Calu3 (cell line): ENCODE measurements at regions of chr7 and their contacts with region 1.

Region 1: DNA sequence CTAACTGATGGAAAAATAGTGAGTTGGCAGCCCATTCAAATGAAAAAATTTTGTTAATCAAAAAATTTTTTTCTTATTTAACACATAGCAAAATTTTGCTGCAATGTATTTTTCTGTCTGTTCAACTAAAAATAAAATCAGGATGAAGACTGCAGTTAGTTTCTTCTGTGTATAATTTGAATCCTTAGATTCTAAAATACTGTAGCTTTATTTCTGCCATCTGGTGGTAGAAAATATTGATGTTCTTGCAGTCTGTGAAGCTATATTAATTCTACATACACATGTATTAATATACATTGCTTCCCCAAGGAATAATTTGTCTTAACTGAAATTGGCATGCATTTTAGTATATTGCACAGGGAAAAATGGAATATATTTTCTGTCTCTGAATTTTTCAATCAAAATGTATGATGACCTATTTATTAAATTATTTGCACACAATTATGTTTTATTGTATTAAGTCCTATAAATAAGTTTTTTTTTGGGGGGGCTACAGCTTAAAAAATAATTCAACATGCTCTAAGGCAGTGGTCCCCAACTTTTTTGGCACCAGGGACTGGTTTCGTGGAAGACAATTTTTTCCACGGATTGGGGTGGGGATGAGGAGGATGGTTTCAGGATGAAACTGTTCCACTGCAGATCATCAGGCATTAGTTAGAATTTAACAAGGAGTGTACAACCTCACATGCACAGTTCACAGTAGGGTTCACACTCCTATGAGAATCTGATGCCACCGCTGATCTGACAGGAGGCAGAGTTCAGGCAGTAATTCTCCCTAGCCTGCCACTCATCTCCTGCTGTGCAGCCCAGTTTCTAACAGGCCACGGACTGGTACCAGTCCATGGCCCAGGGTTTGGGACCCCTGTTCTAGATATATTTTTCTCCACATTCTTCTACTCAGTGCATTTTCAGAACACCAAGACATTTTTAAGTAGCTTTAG is 119.4 kb downstream of the GNAT3 start:
- DNase-seq: no peak
- H3K4me3 Mint-ChIP-seq: no peak overlapping the region
- H3K27ac Mint-ChIP-seq: no peak overlapping the region
- H3K4me1 Mint-ChIP-seq: peaks cover 21% of the 10 kb centered on the region
- H3K27me3 Mint-ChIP-seq: no peaks in the 10 kb centered on the region
- CTCF ChIP-seq: no peak

Region 2: DNA sequence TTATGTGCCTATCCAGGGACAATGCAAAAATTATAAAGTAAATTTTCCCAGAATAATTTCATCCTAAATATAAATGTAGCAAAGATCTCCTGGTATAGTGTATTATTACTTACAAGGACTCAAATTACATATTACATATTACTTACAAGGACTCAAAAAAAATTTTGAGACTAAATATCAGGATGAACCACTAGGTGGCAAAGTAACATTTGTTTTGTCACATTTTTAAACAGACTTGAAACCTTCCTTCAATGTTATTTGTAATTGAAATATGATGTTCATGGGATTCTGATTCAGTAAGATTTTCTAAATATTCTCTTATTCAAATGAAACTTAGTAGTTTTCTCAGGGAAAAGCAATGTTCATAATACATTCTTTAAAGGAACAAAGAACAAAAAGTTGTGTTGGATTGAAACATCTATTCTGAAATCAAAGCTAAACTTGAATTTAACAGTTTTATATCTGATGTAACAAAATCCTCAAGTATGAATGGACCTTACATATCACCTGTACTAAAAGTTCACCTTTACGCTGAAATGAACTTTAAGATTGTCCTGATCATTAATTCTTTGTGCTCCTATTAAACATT is 332.2 kb before region 1 on chr7:
- CTCF ChIA-PET with region 1: no interaction called
- intact Hi-C with region 1: loop called (anchors 2 kb)
- DNase-seq: no peak
- H3K4me3 Mint-ChIP-seq: no peak overlapping the region
- H3K27ac Mint-ChIP-seq: no peak overlapping the region
- H3K4me1 Mint-ChIP-seq: no peaks in the 10 kb centered on the region
- H3K27me3 Mint-ChIP-seq: no peaks in the 10 kb centered on the region
- CTCF ChIP-seq: peak; percentile 15

Region 3: GRCh38 chr7:80134536-80135320 is 257.8 kb before region 1 on chr7 and contains the start of gene GNAI1:
- CTCF ChIA-PET with region 1: interaction called, 17 read pairs
- intact Hi-C with region 1: loop called (anchors 2 kb)
- DNase-seq: peak; percentile 75
- H3K4me3 Mint-ChIP-seq: peak within 1 kb of the TSS; percentile 93
- H3K27ac Mint-ChIP-seq: peak within 1 kb of the TSS; percentile 86
- H3K4me1 Mint-ChIP-seq: peaks cover 21% of the 10 kb centered on the region
- H3K27me3 Mint-ChIP-seq: no peaks in the 10 kb centered on the region
- CTCF ChIP-seq: no peak
- total RNA-seq, gene GNAI1: 14.7 and 20.5 TPM in 2 replicates

Region 4: GRCh38 chr7:80218723-80219122 is 173.8 kb before region 1 on chr7:
- CTCF ChIA-PET with region 1: no interaction called
- intact Hi-C with region 1: loop called (anchors 5 kb)
- DNase-seq: no peak
- H3K4me3 Mint-ChIP-seq: no peak overlapping the region
- H3K27ac Mint-ChIP-seq: no peak overlapping the region
- H3K4me1 Mint-ChIP-seq: peaks cover 10% of the 10 kb centered on the region
- H3K27me3 Mint-ChIP-seq: no peaks in the 10 kb centered on the region
- CTCF ChIP-seq: no peak

Region 5: DNA sequence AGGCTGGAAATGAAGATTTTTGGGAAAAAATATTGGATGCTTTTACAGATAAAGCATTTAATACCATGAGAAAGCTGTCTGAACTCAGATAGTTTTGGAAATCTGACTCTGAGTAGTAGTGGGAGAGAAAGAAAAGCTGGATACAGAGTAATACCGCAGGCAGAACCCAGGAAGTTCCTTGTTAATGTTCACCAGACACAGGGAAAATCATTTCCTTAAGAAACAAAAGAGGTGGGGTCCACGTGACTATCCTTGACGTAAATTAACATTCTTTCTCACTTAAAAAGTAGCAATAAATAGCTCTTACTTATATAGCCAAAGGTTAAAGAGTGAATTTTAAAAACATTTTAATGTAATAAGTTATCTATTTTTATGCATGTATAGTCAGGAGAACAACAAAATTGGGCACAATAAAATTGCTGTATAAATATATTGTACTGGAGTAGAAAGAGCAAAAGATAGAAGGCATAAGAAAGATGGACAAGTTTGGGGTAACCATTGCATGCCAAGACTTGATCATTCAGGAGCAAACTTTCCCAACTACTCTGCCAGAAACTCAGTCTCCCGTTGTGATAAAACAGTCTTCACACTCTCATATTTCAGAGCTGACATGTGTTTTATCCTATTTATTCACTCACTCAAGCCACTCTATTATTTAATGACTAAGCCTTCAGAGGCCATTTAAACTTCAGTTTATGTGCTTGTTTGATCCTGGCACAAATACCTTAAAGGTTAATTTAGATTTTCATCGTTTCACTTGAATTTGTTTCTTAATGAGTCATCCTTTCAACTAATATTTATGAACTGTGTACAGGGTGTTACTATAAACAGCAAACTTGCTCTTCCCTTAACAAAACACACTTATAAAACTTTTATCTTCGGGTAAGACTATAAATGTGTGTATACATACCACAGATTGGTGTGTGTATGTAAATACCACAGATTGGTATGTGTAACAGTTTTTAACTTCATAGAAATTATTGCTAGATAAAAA is 114.8 kb before region 1 on chr7:
- CTCF ChIA-PET with region 1: no interaction called
- intact Hi-C with region 1: loop called (anchors 10 kb)
- DNase-seq: peak; percentile 35
- H3K4me3 Mint-ChIP-seq: peak overlapping the region; percentile 21
- H3K27ac Mint-ChIP-seq: peak overlapping the region; percentile 95
- H3K4me1 Mint-ChIP-seq: peaks cover 44% of the 10 kb centered on the region
- H3K27me3 Mint-ChIP-seq: no peaks in the 10 kb centered on the region
- CTCF ChIP-seq: no peak

Region 6: DNA sequence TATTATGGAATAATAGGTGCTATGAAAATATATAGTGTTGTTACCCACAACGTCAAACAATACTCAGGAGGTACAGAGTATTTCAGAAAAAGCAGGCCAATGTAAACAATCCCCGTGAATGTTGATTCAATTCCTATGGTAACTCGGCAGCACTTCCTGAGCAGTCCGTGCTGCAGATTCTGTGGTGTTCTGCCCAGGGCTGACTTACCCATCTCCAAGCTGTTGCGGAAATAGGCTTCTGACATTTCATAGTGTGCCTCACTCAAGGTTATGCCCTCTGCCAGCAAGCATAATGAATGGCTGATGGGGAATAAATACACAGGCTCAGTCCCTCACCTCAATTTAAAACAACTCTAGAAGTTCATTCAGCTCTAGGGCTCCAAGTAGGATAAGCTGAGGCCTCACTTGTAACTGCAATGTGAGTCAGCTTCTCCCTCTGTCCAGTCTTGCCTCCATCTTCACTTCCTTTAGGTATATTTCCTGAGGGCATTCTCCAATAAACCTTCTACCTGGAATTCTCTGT is 80.3 kb before region 1 on chr7:
- CTCF ChIA-PET with region 1: no interaction called
- intact Hi-C with region 1: no loop called
- DNase-seq: peak; percentile 29
- H3K4me3 Mint-ChIP-seq: no peak overlapping the region
- H3K27ac Mint-ChIP-seq: peak overlapping the region; percentile 36
- H3K4me1 Mint-ChIP-seq: peaks cover 23% of the 10 kb centered on the region
- H3K27me3 Mint-ChIP-seq: no peaks in the 10 kb centered on the region
- CTCF ChIP-seq: no peak

Region 7: DNA sequence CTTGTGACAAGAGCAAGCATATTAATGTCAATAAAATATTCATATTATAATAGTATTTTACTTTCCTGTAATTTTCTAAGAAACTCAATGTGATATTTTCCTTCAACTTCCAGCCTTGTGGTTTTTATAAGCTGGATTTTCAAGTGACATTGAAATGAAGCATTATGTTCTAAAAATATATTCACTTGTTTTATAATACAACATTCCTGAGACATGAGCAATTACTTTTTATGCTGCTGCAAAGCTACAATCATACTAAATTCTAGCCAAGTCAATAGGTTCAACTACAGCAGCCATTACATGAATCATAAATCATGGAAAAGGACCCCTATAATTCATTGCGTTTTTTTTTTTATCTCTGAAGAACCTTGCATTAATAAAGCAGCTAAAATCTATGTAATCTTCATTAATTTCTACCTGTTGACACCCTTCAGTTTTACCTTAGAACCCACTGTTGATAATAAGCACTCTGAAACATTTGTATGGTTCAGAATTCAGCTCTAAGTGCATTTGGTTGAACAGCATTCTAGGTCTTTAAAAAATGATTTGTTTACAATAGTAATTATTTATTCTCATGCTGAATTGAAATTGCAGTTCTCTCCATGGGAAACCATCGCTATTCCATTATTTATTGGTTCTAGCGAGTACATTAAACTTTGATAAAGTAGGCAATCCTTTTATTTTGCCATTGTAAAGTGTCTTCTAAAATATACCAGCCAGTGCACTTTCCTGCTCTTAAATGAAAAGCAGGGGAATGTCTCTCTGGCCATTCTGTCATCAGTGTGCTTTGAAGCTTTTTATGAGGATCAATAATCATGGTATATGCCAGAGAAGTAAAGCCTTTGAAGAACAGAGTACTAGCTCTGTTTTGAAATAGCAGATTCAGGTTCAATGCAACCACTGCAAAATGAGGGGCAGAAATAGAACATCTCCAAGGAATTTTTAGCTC is 13.2 kb before region 1 on chr7:
- CTCF ChIA-PET with region 1: no interaction called
- intact Hi-C with region 1: no loop called
- DNase-seq: no peak
- H3K4me3 Mint-ChIP-seq: no peak overlapping the region
- H3K27ac Mint-ChIP-seq: no peak overlapping the region
- H3K4me1 Mint-ChIP-seq: peaks cover 7% of the 10 kb centered on the region
- H3K27me3 Mint-ChIP-seq: no peaks in the 10 kb centered on the region
- CTCF ChIP-seq: no peak

Region 8: GRCh38 chr7:80508440-80508839 is 115.9 kb after region 1 on chr7:
- CTCF ChIA-PET with region 1: no interaction called
- intact Hi-C with region 1: no loop called
- DNase-seq: no peak
- H3K4me3 Mint-ChIP-seq: no peak overlapping the region
- H3K27ac Mint-ChIP-seq: no peak overlapping the region
- H3K4me1 Mint-ChIP-seq: no peaks in the 10 kb centered on the region
- H3K27me3 Mint-ChIP-seq: no peaks in the 10 kb centered on the region
- CTCF ChIP-seq: no peak